ENCODE measurements at regions of chr2 and their contacts with region 1.

Region 1: GRCh38 chr2:41061356-41061755 is 609.5 kb upstream of the SLC8A1 start:
- DNase-seq: no peak
- H3K4me3 ChIP-seq: no peak overlapping the region
- H3K27ac ChIP-seq: no peak overlapping the region
- H3K4me1 ChIP-seq: no peaks in the 10 kb centered on the region
- H3K27me3 ChIP-seq: no peaks in the 10 kb centered on the region
- CTCF ChIP-seq: no peak
- EP300 ChIP-seq: no peak
- POLR2A ChIP-seq: no peak

Region 2: GRCh38 chr2:41038408-41038807 is 22.9 kb before region 1 on chr2:
- intact Hi-C with region 1: loop called in 1 of 4 experiments (anchors 1 kb)
- DNase-seq: no peak
- H3K4me3 ChIP-seq: no peak overlapping the region
- H3K27ac ChIP-seq: no peak overlapping the region
- H3K4me1 ChIP-seq: no peaks in the 10 kb centered on the region
- H3K27me3 ChIP-seq: no peaks in the 10 kb centered on the region
- CTCF ChIP-seq: no peak
- EP300 ChIP-seq: no peak
- POLR2A ChIP-seq: no peak

Region 3: DNA sequence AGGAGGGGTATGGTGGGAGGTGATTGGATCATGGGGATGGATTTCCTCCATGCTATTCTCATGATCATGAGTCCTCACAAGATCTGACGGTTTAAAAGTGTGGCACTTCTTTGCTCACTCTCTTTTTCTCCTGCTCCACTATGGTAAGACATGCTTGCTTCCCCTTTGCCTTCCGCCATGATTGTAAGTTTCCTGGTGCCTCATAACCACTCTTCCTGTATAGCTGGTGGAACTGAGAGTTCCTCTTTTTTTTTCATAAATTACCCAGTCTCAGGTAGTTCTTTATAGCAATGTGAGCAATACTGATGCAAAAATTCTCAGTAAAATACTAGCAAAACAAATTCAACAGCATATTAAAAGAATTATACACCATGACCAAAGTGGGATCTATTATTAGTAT is 119.0 kb after region 1 on chr2:
- intact Hi-C with region 1: no loop called
- DNase-seq: no peak
- H3K4me3 ChIP-seq: no peak overlapping the region
- H3K27ac ChIP-seq: no peak overlapping the region
- H3K4me1 ChIP-seq: no peaks in the 10 kb centered on the region
- H3K27me3 ChIP-seq: no peaks in the 10 kb centered on the region
- CTCF ChIP-seq: no peak
- EP300 ChIP-seq: no peak
- POLR2A ChIP-seq: no peak